GM12878 (cell line): ENCODE measurements at regions of chr9 and their contacts with region 1.

Region 1: DNA sequence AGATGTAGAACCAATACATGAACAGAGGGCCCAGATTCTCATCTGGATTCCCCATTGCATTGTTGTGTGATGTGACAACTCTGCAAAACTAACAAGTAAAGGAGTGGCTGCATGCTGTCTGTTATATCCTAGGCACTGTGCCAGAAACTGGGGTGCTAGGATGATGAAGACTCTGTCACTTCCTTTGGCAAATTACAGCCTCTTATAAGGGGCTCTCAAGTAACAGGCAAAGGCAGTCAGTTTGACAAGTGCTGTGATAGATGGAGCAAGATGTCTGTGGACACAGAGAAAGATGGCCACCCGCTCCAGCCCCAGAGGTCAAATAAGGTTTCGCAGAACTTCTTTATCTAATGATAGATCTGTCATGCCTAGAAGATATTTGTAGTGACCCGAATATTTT is 115.7 kb downstream of the PAPPA start:
- DNase-seq: no peak
- ATAC-seq: no peak
- H3K4me3 ChIP-seq: no peak overlapping the region
- H3K27ac ChIP-seq: no peak overlapping the region
- H3K4me1 ChIP-seq: no peaks in the 10 kb centered on the region
- H3K27me3 ChIP-seq: no peaks in the 10 kb centered on the region; a peak in 1 of 4 replicates
- CTCF ChIP-seq: no peak
- EP300 ChIP-seq: no peak
- POLR2A ChIP-seq: no peak
- RAD21 ChIP-seq: no peak

Region 2: GRCh38 chr9:116133163-116133562 is 136.1 kb before region 1 on chr9:
- CTCF ChIA-PET with region 1: no interaction called
- POLR2A ChIA-PET with region 1: no interaction called
- RAD21 ChIA-PET with region 1: no interaction called
- SMC1A ChIA-PET with region 1: no interaction called
- in situ Hi-C with region 1: no loop called
- intact Hi-C with region 1: no loop called
- DNase-seq: no peak
- ATAC-seq: peak; percentile 58
- H3K4me3 ChIP-seq: no peak overlapping the region
- H3K27ac ChIP-seq: no peak overlapping the region
- H3K4me1 ChIP-seq: no peaks in the 10 kb centered on the region
- H3K27me3 ChIP-seq: no peaks in the 10 kb centered on the region
- CTCF ChIP-seq: no peak
- EP300 ChIP-seq: no peak
- POLR2A ChIP-seq: no peak
- RAD21 ChIP-seq: no peak

Region 3: DNA sequence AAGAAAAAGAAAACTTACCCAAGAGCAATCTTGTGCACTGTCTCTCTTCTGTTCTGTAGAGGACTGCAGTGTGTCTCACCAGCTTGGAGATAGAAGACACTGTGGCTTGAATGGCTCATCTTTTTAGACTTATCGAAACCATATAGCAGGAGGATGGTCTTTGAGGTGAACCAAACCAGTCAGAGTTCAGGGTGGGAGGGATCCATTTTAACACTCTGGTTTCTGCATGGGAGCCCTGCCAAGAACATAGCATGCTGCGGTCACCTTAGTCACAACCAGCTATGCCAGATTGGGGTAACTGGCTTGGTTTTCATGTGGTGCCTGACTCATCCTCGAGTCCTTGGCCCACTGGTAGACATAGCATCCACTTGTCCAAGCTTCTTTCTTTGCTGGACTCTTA is 19.4 kb after region 1 on chr9:
- CTCF ChIA-PET with region 1: no interaction called
- POLR2A ChIA-PET with region 1: no interaction called
- RAD21 ChIA-PET with region 1: no interaction called
- SMC1A ChIA-PET with region 1: no interaction called
- in situ Hi-C with region 1: no loop called
- intact Hi-C with region 1: no loop called
- DNase-seq: no peak
- ATAC-seq: no peak
- H3K4me3 ChIP-seq: no peak overlapping the region
- H3K27ac ChIP-seq: no peak overlapping the region
- H3K4me1 ChIP-seq: no peaks in the 10 kb centered on the region
- H3K27me3 ChIP-seq: no peaks in the 10 kb centered on the region; a peak in 1 of 4 replicates
- CTCF ChIP-seq: no peak
- EP300 ChIP-seq: no peak
- POLR2A ChIP-seq: no peak
- RAD21 ChIP-seq: no peak

Region 4: GRCh38 chr9:116327701-116328405 is 58.6 kb after region 1 on chr9:
- CTCF ChIA-PET with region 1: no interaction called
- POLR2A ChIA-PET with region 1: no interaction called
- RAD21 ChIA-PET with region 1: no interaction called
- SMC1A ChIA-PET with region 1: no interaction called
- in situ Hi-C with region 1: no loop called
- intact Hi-C with region 1: loop called (anchors 10 kb)
- DNase-seq: no peak
- ATAC-seq: no peak
- H3K4me3 ChIP-seq: no peak overlapping the region
- H3K27ac ChIP-seq: no peak overlapping the region
- H3K4me1 ChIP-seq: no peaks in the 10 kb centered on the region
- H3K27me3 ChIP-seq: no peaks in the 10 kb centered on the region; a peak in 2 of 4 replicates
- CTCF ChIP-seq: no peak
- EP300 ChIP-seq: no peak
- POLR2A ChIP-seq: no peak
- RAD21 ChIP-seq: no peak

Region 5: DNA sequence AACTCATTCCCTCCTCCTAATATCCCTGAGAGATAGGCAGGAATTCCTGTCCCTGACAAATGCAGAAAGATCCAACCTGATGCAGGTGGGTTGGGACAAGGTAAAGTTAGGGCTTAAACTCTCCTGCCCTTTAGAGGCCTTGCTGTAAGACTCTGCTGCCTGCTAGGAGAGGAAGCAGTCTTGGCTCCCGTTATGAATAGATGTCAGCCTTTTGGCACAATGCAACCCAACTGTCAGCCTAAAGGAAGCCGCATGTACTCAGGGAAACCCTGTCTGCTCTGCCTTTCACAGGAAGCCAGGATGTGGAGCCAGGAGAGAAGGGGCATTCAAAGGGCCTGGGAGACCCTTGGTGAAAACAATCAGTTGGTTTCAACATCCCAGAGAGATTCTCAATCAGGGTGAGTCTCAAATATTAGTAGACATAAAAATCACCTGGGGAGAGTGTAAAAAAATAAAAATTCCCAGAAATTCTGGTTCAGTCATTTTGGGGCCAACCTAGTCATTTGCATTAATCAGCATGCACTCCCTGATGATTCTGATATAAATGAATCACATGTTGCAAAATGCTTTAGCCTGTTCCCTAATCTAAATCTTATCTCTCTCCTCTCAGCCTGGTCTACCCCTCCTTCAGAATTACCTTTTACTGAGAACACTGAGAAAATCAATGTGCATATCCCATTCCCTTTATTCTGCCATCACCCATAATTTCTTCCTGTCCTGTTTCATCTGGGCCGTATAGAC is 281.6 kb after region 1 on chr9:
- CTCF ChIA-PET with region 1: no interaction called
- POLR2A ChIA-PET with region 1: no interaction called
- RAD21 ChIA-PET with region 1: no interaction called
- SMC1A ChIA-PET with region 1: no interaction called
- in situ Hi-C with region 1: no loop called
- intact Hi-C with region 1: loop called (anchors 10 kb)
- DNase-seq: no peak
- ATAC-seq: no peak
- H3K4me3 ChIP-seq: no peak overlapping the region
- H3K27ac ChIP-seq: no peak overlapping the region
- H3K4me1 ChIP-seq: peaks cover 4% of the 10 kb centered on the region; the same call in 1 of the 2 replicates
- H3K27me3 ChIP-seq: no peaks in the 10 kb centered on the region
- CTCF ChIP-seq: no peak
- EP300 ChIP-seq: no peak
- POLR2A ChIP-seq: no peak
- RAD21 ChIP-seq: no peak